GM10248 (cell line): ENCODE measurements at regions of chr16 and their contacts with region 1.

Region 1: DNA sequence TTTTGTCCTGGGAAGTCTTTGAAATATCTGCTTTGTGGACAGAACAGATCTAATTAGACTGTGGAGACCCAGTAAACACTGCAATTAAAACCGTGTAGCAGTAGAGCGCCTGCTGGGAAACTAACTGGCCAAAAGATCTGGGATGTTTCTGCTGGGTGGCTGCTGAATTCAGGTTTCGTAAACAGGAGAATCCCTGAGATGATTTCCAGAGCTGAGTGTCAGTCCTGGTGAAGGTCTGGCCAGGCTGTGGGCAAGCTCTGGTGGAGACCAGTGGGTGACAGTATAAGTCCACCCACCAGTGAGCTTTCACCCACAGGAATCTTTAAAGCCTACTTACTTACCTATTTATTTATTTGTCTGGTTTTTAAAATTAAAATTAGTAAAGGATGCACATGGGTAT is 257.2 kb downstream of the IRF8 start:
- DNase-seq: no peak
- CTCF ChIP-seq: no peak

Region 2: DNA sequence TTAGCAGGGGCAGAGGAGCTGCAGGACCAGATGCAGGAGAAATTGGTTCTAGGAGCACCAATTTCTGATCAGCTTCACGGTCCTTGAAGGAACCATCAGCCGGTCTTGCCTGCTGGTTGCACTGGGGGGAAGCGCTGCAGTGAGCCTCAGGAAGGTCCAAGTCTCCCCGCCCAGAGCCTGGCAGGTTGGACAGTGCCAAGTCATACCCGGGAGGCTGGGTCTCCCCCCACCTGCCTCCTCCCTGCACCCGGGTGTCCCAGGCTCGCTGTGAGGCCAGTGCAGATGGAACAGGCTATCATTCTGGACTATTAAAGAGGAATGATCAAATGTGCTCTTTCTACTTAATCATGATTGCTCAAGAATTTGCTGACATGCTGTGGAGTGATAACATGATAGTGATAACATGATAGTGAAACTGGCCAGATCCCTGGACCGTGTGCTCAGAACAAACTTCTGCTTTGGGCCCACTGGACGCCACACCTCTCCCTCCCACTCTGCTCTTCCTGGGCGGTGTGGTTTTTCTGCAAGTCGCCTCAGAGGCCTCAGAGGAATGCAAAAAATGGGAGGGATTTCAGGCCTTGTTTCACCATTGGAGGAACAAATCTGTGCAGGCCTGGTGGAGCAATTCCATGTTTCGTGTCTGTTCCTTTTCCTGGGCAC is 21.2 kb before region 1 on chr16:
- CTCF ChIA-PET with region 1: no interaction called
- POLR2A ChIA-PET with region 1: no interaction called
- DNase-seq: no peak
- CTCF ChIP-seq: no peak

Region 3: GRCh38 chr16:86167061-86167460 is 10.9 kb after region 1 on chr16:
- CTCF ChIA-PET with region 1: interaction called, 12 read pairs
- POLR2A ChIA-PET with region 1: no interaction called
- DNase-seq: no peak
- CTCF ChIP-seq: no peak

Region 4: DNA sequence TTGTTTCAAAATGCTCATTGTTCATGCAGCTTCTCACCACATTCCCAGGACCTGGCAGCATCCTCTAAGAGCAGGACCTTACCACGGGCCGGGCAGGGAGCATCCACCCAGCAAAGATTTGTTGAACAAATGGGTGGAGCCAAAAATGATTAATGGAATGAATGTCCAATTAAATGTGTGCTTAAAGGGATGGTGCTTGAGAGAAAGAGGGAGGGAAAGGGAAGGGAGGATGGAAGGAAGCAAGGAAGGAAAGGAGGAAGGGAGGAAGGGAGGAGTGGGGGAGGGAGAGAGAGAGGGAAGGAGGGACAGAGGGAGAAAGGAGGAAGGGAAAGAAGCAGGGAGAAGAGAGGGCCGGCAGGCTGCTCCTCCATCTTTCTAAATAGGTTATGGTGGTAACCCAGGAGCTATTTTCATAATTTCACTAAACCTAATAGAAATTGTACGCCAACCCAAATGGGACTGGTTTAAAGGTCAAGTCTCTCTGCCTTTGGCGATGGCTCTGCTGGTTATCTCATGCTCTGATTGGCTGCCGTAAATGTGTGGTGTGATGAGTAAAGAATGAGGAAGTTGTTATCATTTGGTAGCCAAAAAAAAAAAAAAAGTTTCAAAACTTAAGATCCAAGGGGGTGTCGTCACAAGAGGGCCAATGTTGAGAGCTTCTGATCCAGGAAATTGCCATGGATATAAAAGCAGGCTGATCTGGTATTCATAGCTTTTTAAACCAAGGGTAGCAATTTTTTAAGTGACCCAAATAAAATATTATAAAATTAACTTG is 227.5 kb after region 1 on chr16:
- CTCF ChIA-PET with region 1: no interaction called
- POLR2A ChIA-PET with region 1: no interaction called
- DNase-seq: no peak
- CTCF ChIP-seq: no peak

Region 5: GRCh38 chr16:86457501-86458148 is 301.5 kb after region 1 on chr16:
- CTCF ChIA-PET with region 1: no interaction called
- POLR2A ChIA-PET with region 1: no interaction called
- DNase-seq: no peak
- CTCF ChIP-seq: no peak